ENCODE measurements at regions of chr5 and their contacts with region 1.

Region 1: GRCh38 chr5:163437309-163438182 is at the start of gene CCNG1:
- H3K4me3 ChIP-seq: peak within 1 kb of the TSS; percentile 98
- H3K27ac ChIP-seq: peak within 1 kb of the TSS; percentile 98
- H3K4me1 ChIP-seq: peaks cover 5% of the 10 kb centered on the region; the same call in 1 of the 2 replicates
- CTCF ChIP-seq: peak; percentile 63

Region 2: GRCh38 chr5:163321511-163321910 is 116.0 kb before region 1 on chr5:
- CTCF ChIA-PET with region 1: no interaction called
- POLR2A ChIA-PET with region 1: no interaction called
- H3K4me3 ChIP-seq: no peak overlapping the region
- H3K27ac ChIP-seq: no peak overlapping the region
- H3K4me1 ChIP-seq: no peaks in the 10 kb centered on the region
- CTCF ChIP-seq: no peak

Region 3: GRCh38 chr5:163451489-163451888 is 13.9 kb after region 1 on chr5:
- CTCF ChIA-PET with region 1: no interaction called
- POLR2A ChIA-PET with region 1: interaction called, 16 read pairs
- H3K4me3 ChIP-seq: no peak overlapping the region
- H3K27ac ChIP-seq: no peak overlapping the region
- H3K4me1 ChIP-seq: no peaks in the 10 kb centered on the region
- CTCF ChIP-seq: no peak

Region 4: DNA sequence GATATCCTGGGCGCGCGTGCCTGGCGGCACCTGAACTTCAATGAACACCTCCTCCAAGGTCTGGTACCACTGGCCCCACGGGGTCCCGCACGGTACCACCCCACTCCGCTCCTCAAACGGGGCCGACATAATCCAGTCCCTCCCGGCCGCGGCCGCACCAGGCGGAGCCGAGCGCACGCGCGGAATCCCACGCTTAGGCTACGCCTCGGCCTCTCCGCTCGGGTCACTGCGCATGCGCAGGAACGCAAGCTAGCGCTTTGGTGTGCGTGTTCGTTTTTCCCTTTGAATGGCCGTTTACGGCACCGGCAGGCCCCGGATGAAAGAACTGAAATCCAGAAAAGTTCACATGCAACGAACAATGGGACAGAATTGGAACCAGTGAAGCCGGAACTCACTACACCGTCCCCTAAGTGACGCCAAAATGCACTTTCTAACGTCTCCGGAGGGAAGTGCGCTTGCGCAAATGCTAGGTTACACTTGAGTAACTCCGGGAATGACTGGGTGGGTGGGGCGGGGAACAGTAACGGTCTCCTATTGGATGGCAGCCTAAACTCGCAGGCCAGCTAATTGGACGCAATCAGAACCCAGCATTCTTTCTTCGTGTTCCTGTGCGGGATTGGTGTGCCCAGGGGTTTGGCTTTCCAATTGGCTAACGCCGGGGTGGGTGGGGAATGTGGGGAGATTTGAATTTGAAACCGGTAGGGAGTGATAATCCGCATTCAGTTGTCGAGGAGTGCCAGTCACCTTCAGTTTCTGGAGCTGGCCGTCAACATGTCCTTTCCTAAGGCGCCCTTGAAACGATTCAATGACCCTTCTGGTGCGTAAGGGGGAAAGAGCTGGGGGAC is 22.6 kb after region 1 on chr5 and contains the starts of genes HMMR and NUDCD2:
- CTCF ChIA-PET with region 1: interaction called, 8 read pairs
- POLR2A ChIA-PET with region 1: interaction called, 166 read pairs
- H3K4me3 ChIP-seq: peak within 1 kb of the TSS; percentile 84
- H3K27ac ChIP-seq: peak within 1 kb of the TSS; percentile 99
- H3K4me1 ChIP-seq: peaks cover 10% of the 10 kb centered on the region
- CTCF ChIP-seq: peak; percentile 89

Region 5: GRCh38 chr5:163505368-163506094 is 68.0 kb after region 1 on chr5 and contains the start of gene MAT2B:
- CTCF ChIA-PET with region 1: interaction called, 3 read pairs
- POLR2A ChIA-PET with region 1: interaction called, 14 read pairs
- H3K4me3 ChIP-seq: peak within 1 kb of the TSS; percentile 80
- H3K27ac ChIP-seq: peak within 1 kb of the TSS; percentile 92
- H3K4me1 ChIP-seq: peaks cover 16% of the 10 kb centered on the region
- CTCF ChIP-seq: peak; percentile 93